T-cell (primary cell): ENCODE measurements at regions of chr11 and their contacts with region 1.

Region 1: DNA sequence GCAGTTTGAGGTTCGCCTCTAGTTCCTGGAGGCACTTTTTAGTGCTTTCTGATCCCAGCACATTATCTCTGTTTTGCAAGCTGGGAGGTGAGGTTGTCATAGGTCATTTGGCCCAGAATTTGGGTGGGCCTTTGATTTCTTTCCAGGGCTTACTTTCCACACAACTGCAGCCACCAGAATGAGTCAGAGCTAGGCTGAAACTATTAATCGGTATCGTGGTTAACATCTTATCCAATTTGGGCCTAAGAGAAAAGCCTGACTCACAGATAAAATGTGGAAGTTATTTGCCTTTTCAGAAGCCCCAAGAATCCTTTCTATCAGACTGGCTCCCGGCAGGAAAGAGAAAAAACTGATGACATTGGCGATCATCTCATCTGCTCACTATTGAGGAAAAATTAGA is 166.4 kb downstream of the KIRREL3 start:
- DNase-seq: no peak
- ATAC-seq: no peak
- H3K4me3 ChIP-seq: no peak overlapping the region
- H3K4me3 Mint-ChIP-seq: no peak overlapping the region
- H3K27ac ChIP-seq: no peak overlapping the region
- H3K27ac Mint-ChIP-seq: no peak overlapping the region
- H3K4me1 ChIP-seq: no peaks in the 10 kb centered on the region
- H3K4me1 Mint-ChIP-seq: no peaks in the 10 kb centered on the region
- H3K27me3 ChIP-seq: peaks cover 0 to 3% of the 10 kb centered on the region in 2 experiments
- H3K27me3 Mint-ChIP-seq: peaks cover 0 to 7% of the 10 kb centered on the region in 2 donors

Region 2: GRCh38 chr11:126246636-126247035 is 587.5 kb before region 1 on chr11:
- CTCF ChIA-PET with region 1: no interaction called
- POLR2A ChIA-PET with region 1: no interaction called
- DNase-seq: no peak
- ATAC-seq: no peak
- H3K4me3 ChIP-seq: no peak overlapping the region
- H3K4me3 Mint-ChIP-seq: no peak overlapping the region
- H3K27ac ChIP-seq: no peak overlapping the region
- H3K27ac Mint-ChIP-seq: no peak overlapping the region
- H3K4me1 ChIP-seq: no peaks in the 10 kb centered on the region
- H3K4me1 Mint-ChIP-seq: no peaks in the 10 kb centered on the region
- H3K27me3 ChIP-seq: no peaks in the 10 kb centered on the region
- H3K27me3 Mint-ChIP-seq: no peaks in the 10 kb centered on the region

Region 3: GRCh38 chr11:126808836-126809235 is 25.3 kb before region 1 on chr11:
- CTCF ChIA-PET with region 1: no interaction called
- POLR2A ChIA-PET with region 1: no interaction called
- DNase-seq: no peak
- ATAC-seq: no peak
- H3K4me3 ChIP-seq: no peak overlapping the region
- H3K4me3 Mint-ChIP-seq: no peak overlapping the region
- H3K27ac ChIP-seq: no peak overlapping the region
- H3K27ac Mint-ChIP-seq: no peak overlapping the region
- H3K4me1 ChIP-seq: no peaks in the 10 kb centered on the region
- H3K4me1 Mint-ChIP-seq: no peaks in the 10 kb centered on the region
- H3K27me3 ChIP-seq: peaks cover 0 to 4% of the 10 kb centered on the region in 2 experiments
- H3K27me3 Mint-ChIP-seq: peaks cover 6 to 12% of the 10 kb centered on the region in 2 donors

Region 4: GRCh38 chr11:126870021-126870420 is 35.9 kb after region 1 on chr11:
- CTCF ChIA-PET with region 1: no interaction called
- POLR2A ChIA-PET with region 1: interaction called in 1 of 2 experiments, 17 read pairs
- DNase-seq: no peak
- ATAC-seq: no peak
- H3K4me3 ChIP-seq: no peak overlapping the region
- H3K4me3 Mint-ChIP-seq: no peak overlapping the region
- H3K27ac ChIP-seq: no peak overlapping the region
- H3K27ac Mint-ChIP-seq: no peak overlapping the region
- H3K4me1 ChIP-seq: no peaks in the 10 kb centered on the region
- H3K4me1 Mint-ChIP-seq: no peaks in the 10 kb centered on the region
- H3K27me3 ChIP-seq: peaks cover 0 to 17% of the 10 kb centered on the region in 2 experiments
- H3K27me3 Mint-ChIP-seq: peaks cover 0 to 20% of the 10 kb centered on the region in 2 donors